Right cardiac atrium (tissue), 5 donors: ENCODE measurements at regions of chr9 and their contacts with region 1.

Region 1: DNA sequence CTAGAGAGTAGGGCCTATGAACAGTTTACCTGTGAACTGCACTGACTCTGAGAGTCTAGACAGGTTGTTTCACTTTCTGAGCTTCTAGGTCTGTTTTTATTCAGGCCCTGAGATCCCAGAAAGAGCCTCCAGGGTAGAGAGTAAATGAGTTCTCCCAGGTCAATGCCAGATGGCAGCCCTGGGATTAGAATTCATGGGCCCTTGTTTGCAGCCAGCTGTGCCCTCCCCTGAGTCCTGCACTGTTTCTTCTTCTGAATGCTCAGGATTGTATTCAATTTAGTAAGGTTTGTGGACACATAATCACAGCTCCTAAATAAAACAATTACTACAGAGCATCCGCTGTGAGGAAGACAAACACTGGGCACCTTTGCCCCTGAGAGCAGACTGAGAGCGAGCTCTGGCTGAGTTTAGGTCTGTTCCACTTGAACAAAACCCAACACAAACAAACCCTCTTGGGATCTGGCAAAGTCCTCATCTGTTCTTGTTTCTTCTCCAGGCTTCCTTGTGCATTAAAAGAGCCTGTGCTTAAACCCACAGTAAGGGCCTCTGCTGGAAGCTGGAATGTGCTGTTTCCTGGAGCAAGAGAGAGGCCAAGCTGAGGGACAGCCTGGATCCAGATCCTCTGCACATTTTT is 29.9 kb downstream of the FAM219A start:
- DNase-seq: no peak
- ATAC-seq: no peak
- H3K4me3 ChIP-seq: no peak overlapping the region
- H3K27ac ChIP-seq: no peak overlapping the region
- H3K4me1 ChIP-seq: peaks cover 6% of the 10 kb centered on the region
- H3K27me3 ChIP-seq: no peaks in the 10 kb centered on the region

Region 2: DNA sequence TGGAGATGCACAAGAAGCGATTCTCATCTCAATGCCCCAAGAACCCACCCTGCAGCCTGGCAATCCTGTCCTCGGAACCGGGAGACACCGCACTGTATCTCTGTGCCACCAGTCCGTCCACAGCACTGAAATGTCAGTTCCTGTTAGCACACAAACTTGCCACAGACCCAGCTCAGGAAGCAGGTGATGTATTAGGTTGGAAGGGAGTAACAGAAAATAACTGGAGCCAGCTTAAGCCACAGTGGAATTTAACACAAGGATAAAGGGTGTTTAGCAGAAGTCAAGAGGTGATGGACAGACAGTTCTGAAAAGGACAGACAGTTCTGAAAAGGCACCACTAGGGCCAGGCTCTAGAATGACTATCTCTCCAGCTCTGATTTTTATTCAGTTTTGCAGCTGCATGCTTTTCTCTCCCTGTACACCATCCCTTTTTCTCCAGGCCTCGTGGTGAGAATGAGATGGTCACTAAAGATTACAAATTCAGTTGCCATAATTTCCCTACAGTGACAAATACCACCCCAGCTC is 790.0 kb before region 1 on chr9:
- intact Hi-C with region 1: no loop called
- DNase-seq: no peak
- ATAC-seq: no peak
- H3K4me3 ChIP-seq: no peak overlapping the region
- H3K27ac ChIP-seq: no peak overlapping the region
- H3K4me1 ChIP-seq: no peaks in the 10 kb centered on the region
- H3K27me3 ChIP-seq: no peaks in the 10 kb centered on the region

Region 3: GRCh38 chr9:34001298-34001697 is 427.1 kb before region 1 on chr9:
- intact Hi-C with region 1: no loop called
- DNase-seq: no peak
- ATAC-seq: no peak
- H3K4me3 ChIP-seq: no peak overlapping the region
- H3K27ac ChIP-seq: no peak overlapping the region
- H3K4me1 ChIP-seq: no peaks in the 10 kb centered on the region
- H3K27me3 ChIP-seq: no peaks in the 10 kb centered on the region

Region 4: GRCh38 chr9:34363619-34364351 is 64.7 kb before region 1 on chr9:
- intact Hi-C with region 1: loop called in 1 of 4 experiments (anchors 10 kb)
- DNase-seq: peak; percentile 43 to 81 (median 69)
- ATAC-seq: peak; percentile 81 to 94
- H3K4me3 ChIP-seq: peak overlapping the region; percentile 1
- H3K27ac ChIP-seq: peak overlapping the region; percentile 87
- H3K4me1 ChIP-seq: peaks cover 5% of the 10 kb centered on the region
- H3K27me3 ChIP-seq: no peaks in the 10 kb centered on the region

Region 5: GRCh38 chr9:34603610-34604231 is 175.3 kb after region 1 on chr9:
- intact Hi-C with region 1: loop called in 2 of 4 experiments (anchors 10 kb)
- DNase-seq: peak; percentile 79 to 96 (median 90)
- ATAC-seq: peak; percentile 86 to 89
- H3K4me3 ChIP-seq: no peak overlapping the region
- H3K27ac ChIP-seq: no peak overlapping the region
- H3K4me1 ChIP-seq: peaks cover 3% of the 10 kb centered on the region
- H3K27me3 ChIP-seq: no peaks in the 10 kb centered on the region